ENCODE measurements at regions of chr12 and their contacts with region 1.

Region 1: DNA sequence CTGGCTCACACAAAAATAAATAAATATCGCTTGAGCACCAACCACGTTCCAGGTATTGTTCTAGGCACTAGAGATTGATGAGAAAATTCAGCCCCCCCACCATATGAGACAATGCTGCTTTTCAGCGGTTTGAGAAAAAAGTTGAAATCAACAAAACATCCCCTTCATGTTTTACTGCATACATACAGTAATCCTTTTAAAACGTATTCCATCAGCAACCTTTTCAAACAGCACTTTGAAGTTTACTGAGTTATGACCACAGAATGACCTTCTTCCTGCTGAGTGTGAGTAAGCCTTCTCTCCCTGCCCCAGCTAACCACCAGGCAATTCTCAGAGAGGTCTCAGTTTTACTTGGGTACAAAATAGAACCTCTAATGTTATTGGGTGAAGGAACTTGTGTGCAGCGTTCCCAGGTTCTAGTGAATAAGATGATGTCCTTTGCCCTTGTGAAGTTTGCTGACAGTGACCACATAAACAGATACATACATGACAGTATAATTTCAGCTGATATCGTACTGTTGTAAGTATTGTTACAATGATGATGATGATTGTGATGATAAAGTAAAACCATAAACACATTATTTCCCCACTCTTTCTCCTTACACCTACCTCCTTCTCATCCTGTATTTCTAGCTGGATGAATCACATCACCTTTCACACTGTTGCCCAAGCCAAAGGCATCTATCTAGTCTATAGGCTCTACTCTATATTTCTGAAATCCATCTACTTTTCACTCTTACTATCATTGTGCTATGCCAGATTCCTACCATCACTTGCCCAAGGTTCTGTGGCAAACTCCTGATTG is 124.4 kb upstream of the KRR1 start:
- DNase-seq: no peak
- H3K4me3 Mint-ChIP-seq: no peak overlapping the region
- H3K27ac Mint-ChIP-seq: peak overlapping the region; percentile 54
- H3K4me1 Mint-ChIP-seq: peaks cover 38% of the 10 kb centered on the region
- H3K27me3 Mint-ChIP-seq: peaks cover 3% of the 10 kb centered on the region

Region 2: GRCh38 chr12:75503866-75504265 is 131.9 kb before region 1 on chr12:
- intact Hi-C with region 1: no loop called
- DNase-seq: no peak
- H3K4me3 Mint-ChIP-seq: no peak overlapping the region
- H3K27ac Mint-ChIP-seq: no peak overlapping the region
- H3K4me1 Mint-ChIP-seq: peaks cover 12% of the 10 kb centered on the region
- H3K27me3 Mint-ChIP-seq: no peaks in the 10 kb centered on the region

Region 3: DNA sequence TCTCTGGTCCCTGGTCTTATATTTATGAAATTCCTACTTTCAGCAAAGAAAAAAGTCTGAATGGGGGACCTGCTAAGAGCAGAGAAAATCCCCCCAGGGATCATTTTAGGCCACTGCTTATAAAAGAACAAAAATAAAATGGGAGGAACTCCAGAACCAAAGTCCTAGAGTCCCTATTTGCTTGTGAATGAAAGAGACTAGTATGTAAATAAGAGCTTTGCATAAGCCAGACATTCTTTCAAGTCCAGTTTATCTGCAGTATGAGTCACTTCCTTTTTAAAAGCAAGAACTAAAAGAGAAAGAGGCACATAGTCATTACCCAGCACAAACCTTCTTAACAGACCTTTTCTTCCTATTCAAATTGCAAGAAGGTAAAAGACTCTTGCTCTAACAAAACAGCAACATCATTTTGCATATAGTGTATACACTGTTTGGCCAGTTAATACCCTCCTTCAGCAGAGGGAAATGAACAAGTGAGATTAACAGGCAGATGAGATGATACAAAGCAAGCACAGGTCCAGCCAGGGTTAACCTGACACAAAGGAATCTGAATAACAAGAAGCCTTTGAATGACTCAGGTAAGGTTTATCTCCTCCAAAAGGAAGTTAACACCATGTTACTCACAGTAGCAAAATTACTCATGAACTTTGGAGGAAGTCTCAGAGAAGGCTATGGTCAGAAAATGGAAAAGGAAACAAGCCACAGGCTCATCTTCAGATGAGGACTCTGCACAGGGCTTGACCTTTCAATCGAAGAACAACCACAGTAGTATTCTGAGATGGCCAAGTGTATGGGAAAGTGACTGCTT is 308.5 kb after region 1 on chr12:
- intact Hi-C with region 1: loop called (anchors 1 kb)
- DNase-seq: no peak
- H3K4me3 Mint-ChIP-seq: peak overlapping the region; percentile 52
- H3K27ac Mint-ChIP-seq: peak overlapping the region; percentile 97
- H3K4me1 Mint-ChIP-seq: peaks cover 32% of the 10 kb centered on the region
- H3K27me3 Mint-ChIP-seq: no peaks in the 10 kb centered on the region